Activated T-helper 1 cell treated with anti-CD3 and anti-CD28 coated beads, Interleukin-12 subunit alpha, Interleukin-12 subunit beta, Interleukin-2, Interleukin-4 antibody, amounts not matched to agents 30 ng/mL and 10 ng/mL and 1 ng/mL, durations not matched to agents 14 hours and 24 hours and 36 hours (primary cell): ENCODE measurements at regions of chr12 and their contacts with region 1.

Region 1: GRCh38 chr12:88052686-88053085 is 23.5 kb upstream of the C12orf50 start:
- DNase-seq: no peak
- H3K4me3 Mint-ChIP-seq: no peak overlapping the region
- H3K27ac Mint-ChIP-seq: no peak overlapping the region
- H3K4me1 Mint-ChIP-seq: peaks cover 4% of the 10 kb centered on the region
- H3K27me3 Mint-ChIP-seq: no peaks in the 10 kb centered on the region

Region 2: GRCh38 chr12:87848248-87848868 is 204.3 kb before region 1 on chr12:
- intact Hi-C with region 1: loop called (anchors 1 kb)
- DNase-seq: no peak
- H3K4me3 Mint-ChIP-seq: no peak overlapping the region
- H3K27ac Mint-ChIP-seq: no peak overlapping the region
- H3K4me1 Mint-ChIP-seq: no peaks in the 10 kb centered on the region
- H3K27me3 Mint-ChIP-seq: no peaks in the 10 kb centered on the region